Naive thymus-derived CD4-positive, alpha-beta T cell (primary cell): ENCODE measurements at regions of chr2 and their contacts with region 1.

Region 1: GRCh38 chr2:75403991-75404428 is 156.7 kb downstream of the EVA1A start:
- DNase-seq: peak in 6 of 9 donors; percentile 11 to 53 (median 49)
- ATAC-seq: peak; percentile 75
- H3K4me3 ChIP-seq: no peak overlapping the region
- H3K4me3 Mint-ChIP-seq: no peak overlapping the region
- H3K27ac ChIP-seq: no peak overlapping the region
- H3K27ac Mint-ChIP-seq: no peak overlapping the region
- H3K4me1 ChIP-seq: no peaks in the 10 kb centered on the region
- H3K4me1 Mint-ChIP-seq: peaks cover 0 to 46% (median 6%) of the 10 kb centered on the region in 7 donors
- H3K27me3 ChIP-seq: peaks cover 0 to 6% of the 10 kb centered on the region in 2 donors
- H3K27me3 Mint-ChIP-seq: peaks cover 0 to 9% (median 4%) of the 10 kb centered on the region in 5 donors

Region 2: GRCh38 chr2:75064691-75065396 is 339.2 kb before region 1 on chr2:
- CTCF ChIA-PET with region 1: no interaction called
- POLR2A ChIA-PET with region 1: no interaction called
- intact Hi-C with region 1: loop called (anchors 1 kb)
- DNase-seq: peak in 8 of 9 donors; percentile 12 to 45 (median 30)
- ATAC-seq: no peak
- H3K4me3 ChIP-seq: no peak overlapping the region
- H3K4me3 Mint-ChIP-seq: no peak overlapping the region
- H3K27ac ChIP-seq: no peak overlapping the region
- H3K27ac Mint-ChIP-seq: no peak overlapping the region
- H3K4me1 ChIP-seq: no peaks in the 10 kb centered on the region
- H3K4me1 Mint-ChIP-seq: peaks cover 0 to 16% (median 0%) of the 10 kb centered on the region in 7 donors
- H3K27me3 ChIP-seq: no peaks in the 10 kb centered on the region
- H3K27me3 Mint-ChIP-seq: no peaks in the 10 kb centered on the region

Region 3: DNA sequence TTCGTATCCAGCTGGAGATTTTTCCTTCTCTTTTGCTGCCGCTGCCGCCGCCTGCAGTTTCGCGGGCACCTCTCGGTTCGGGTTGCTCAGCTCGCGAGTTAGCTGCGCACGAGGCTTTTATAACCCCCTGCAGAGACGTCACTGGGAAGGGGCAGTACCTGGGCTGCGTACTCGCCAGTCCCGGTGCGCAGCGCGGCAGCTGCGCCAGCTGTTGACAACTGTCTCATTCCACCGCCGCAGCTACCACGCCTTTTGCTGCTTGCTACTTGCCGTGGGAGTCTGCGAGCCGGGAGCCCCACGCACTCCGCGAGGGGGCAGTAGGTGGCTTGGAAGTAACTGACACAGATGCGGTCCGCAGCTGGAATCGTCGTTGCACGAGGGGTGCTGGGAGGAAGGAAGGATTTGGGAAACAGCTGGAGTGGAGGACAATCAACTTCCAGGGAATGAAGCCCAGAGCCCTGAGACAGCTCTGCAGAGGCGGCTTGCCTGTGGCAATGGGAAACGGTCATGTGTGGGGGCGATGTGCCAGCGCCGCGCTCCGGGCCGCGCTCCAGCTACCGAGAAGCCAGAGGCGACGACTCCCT is 204.5 kb before region 1 on chr2 and contains the start of gene TACR1:
- CTCF ChIA-PET with region 1: interaction called, 4 read pairs
- POLR2A ChIA-PET with region 1: no interaction called
- intact Hi-C with region 1: loop called in 1 of 2 experiments (anchors 2 kb)
- DNase-seq: peak; percentile 18 to 56 (median 47)
- ATAC-seq: peak; percentile 72
- H3K4me3 ChIP-seq: no peak within 1 kb of the TSS
- H3K4me3 Mint-ChIP-seq: peak within 1 kb of the TSS in 9 of 10 donors; percentile 69 to 91 (median 83)
- H3K27ac ChIP-seq: no peak within 1 kb of the TSS
- H3K27ac Mint-ChIP-seq: no peak within 1 kb of the TSS
- H3K4me1 ChIP-seq: peaks cover 0 to 10% of the 10 kb centered on the region in 2 donors
- H3K4me1 Mint-ChIP-seq: peaks cover 0 to 25% (median 7%) of the 10 kb centered on the region in 7 donors
- H3K27me3 ChIP-seq: peaks cover 0 to 7% of the 10 kb centered on the region in 2 donors
- H3K27me3 Mint-ChIP-seq: peaks cover 70 to 77% (median 75%) of the 10 kb centered on the region in 5 donors
- total RNA-seq, gene TACR1: 0.24 TPM in 1 of 5 experiments, not detected in the others

Region 4: DNA sequence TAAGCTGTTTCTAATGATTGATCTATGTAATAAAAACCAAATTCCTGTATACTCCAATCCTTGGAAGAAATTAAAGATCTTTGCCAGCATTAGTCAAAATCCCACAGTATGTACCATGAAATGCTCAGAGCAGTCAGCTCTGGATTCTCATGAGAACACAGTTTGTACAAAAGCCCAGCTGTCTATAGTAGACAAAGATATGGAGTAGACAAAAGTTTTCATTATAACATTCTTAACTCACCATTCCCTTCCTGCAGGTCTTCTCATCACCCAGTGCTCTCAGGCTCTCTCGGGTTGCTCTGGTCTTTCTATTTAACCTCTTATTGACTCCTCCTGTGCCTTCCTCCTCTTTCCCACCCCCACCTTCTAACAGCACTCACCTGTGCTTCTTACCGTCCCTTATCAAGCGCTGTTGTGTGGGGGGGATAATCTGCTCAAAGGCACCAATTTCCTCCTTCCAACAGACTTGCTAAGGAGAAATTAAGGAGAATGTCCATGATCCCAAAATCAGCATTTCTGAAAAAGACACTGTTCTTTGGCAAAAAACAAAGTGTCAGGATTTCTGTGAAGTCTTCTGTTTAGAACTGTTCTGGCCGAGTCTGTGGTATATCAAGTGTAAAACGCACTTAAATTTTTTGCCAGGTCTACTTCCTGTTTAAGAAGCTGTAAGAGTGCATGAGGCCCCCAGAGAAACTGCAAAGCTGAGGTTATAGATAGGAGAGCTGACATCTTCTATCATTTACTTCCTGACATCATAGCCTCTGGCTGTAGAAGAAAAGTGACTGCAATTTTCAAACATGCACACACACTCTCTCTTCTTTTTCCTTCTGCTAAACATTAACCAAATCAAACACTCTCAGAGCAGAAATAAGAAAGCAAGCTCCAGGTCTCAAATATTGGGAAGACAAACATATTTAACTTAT is 12.7 kb after region 1 on chr2:
- CTCF ChIA-PET with region 1: no interaction called
- POLR2A ChIA-PET with region 1: interaction called, 4 read pairs
- intact Hi-C with region 1: loop called in 1 of 2 experiments (anchors 1 kb)
- DNase-seq: peak in 7 of 9 donors; percentile 35 to 71 (median 51)
- ATAC-seq: peak; percentile 70
- H3K4me3 ChIP-seq: peak overlapping the region; percentile 42
- H3K4me3 Mint-ChIP-seq: peak overlapping the region in 9 of 10 donors; percentile 87 to 96 (median 91)
- H3K27ac ChIP-seq: peak overlapping the region; percentile 62
- H3K27ac Mint-ChIP-seq: peak overlapping the region in 8 of 9 donors; percentile 87 to 95 (median 93)
- H3K4me1 ChIP-seq: peaks cover 0 to 10% of the 10 kb centered on the region in 2 donors
- H3K4me1 Mint-ChIP-seq: peaks cover 6 to 66% (median 33%) of the 10 kb centered on the region in 7 donors
- H3K27me3 ChIP-seq: no peaks in the 10 kb centered on the region
- H3K27me3 Mint-ChIP-seq: peaks cover 0 to 10% (median 0%) of the 10 kb centered on the region in 5 donors